ENCODE measurements at regions of chr5 and their contacts with region 1.

Region 1: DNA sequence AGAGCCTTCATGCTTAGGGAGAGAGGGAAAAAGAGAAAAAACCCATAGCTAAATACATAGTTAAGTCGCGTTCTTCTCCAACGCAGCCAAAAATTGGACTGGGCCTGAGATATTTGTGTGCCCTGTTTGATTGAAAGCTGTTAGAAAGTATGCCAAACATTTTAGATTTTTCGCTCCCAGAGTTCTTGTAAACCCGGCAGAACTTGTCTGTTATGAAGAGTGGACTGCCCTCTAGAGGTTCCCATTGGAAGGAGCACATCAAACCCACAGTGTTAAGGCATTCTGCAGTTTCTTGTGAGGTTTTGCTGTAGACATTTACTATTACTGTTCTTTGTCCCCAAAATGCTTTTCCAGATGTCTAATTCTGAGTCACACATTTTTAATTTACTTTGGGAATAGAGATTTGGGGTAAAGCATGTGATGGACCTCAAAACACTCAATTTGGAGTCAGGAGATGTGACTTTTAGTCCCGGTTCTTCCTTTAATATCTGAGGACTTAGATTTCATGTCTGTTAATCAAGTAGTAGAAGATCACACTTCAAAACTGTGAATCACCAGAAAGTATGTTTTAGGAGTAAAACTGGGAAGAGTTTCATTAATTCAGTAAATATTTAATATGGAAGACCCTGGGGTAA is 96.6 kb downstream of the PCSK1 start:
- DNase-seq: peak; percentile 89
- H3K4me3 ChIP-seq: no peak overlapping the region
- CTCF ChIP-seq: peak; percentile 90

Region 2: GRCh38 chr5:95864944-95865504 is 471.4 kb before region 1 on chr5:
- in situ Hi-C with region 1: loop called (anchors 5 kb)
- DNase-seq: no peak
- H3K4me3 ChIP-seq: no peak overlapping the region
- CTCF ChIP-seq: no peak

Region 3: GRCh38 chr5:95959888-95960666 is 376.4 kb before region 1 on chr5:
- in situ Hi-C with region 1: loop called (anchors 10 kb)
- DNase-seq: no peak
- H3K4me3 ChIP-seq: peak overlapping the region; percentile 96
- CTCF ChIP-seq: peak; percentile 6

Region 4: GRCh38 chr5:96254980-96255691 is 81.3 kb before region 1 on chr5:
- in situ Hi-C with region 1: loop called (anchors 5 kb)
- DNase-seq: peak; percentile 87
- H3K4me3 ChIP-seq: no peak overlapping the region
- CTCF ChIP-seq: no peak

Region 5: DNA sequence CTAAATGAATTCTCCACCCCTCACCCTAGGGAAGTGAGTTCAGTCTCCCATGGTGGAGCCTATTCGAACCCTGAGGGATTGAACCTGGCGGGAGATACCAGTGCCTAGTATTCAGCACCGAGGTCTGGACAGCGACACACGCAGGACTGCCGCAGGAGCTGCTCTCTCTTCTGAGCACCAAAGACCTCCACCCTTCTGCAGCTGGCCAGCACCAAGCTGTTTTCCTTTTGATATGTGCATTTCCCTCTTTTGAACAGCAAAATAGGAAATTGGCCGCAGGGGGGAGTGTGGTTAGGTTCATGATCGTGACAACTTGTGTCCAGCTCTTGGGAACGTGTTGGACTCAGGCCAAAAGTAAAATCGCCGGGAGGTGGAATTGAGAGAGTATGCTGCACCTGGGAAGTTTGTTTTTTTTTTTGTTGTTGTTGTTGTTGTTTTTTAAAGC is 97.8 kb after region 1 on chr5:
- in situ Hi-C with region 1: no loop called
- DNase-seq: peak; percentile 72
- H3K4me3 ChIP-seq: no peak overlapping the region
- CTCF ChIP-seq: no peak

Region 6: DNA sequence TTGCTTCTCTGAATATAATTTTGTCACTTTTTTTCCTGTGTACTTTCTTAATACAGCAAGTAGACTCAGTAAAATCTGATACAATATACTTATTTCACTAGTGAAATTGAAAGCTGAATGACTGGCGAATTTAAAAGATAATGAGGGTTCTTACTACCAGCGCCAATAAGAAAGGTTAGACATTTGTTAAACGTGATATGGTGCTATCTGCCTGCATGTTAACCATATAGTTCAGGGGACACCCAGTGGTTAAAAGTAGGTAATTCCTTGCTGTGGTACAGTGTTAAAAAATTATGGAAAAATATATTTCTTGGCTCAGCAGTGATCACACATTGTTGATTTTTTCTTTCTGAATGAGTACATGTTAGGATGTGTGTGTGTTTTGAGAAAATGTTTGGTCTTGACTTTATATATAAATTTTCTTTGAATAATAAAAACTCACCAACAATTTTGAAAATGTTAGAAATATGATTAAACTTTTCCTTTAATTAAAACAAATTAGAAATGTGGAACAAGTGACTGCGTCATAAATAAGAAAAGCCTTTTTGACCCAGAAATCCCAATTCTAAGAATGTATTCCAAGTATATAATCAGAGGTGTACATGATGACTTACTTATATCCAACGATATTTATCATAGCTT is 351.5 kb after region 1 on chr5:
- in situ Hi-C with region 1: loop called (anchors 25 kb)
- DNase-seq: peak; percentile 56
- H3K4me3 ChIP-seq: no peak overlapping the region
- CTCF ChIP-seq: peak; percentile 56